Endothelial cell of umbilical vein (primary cell): ENCODE measurements at regions of chr6 and their contacts with region 1.

Region 1: DNA sequence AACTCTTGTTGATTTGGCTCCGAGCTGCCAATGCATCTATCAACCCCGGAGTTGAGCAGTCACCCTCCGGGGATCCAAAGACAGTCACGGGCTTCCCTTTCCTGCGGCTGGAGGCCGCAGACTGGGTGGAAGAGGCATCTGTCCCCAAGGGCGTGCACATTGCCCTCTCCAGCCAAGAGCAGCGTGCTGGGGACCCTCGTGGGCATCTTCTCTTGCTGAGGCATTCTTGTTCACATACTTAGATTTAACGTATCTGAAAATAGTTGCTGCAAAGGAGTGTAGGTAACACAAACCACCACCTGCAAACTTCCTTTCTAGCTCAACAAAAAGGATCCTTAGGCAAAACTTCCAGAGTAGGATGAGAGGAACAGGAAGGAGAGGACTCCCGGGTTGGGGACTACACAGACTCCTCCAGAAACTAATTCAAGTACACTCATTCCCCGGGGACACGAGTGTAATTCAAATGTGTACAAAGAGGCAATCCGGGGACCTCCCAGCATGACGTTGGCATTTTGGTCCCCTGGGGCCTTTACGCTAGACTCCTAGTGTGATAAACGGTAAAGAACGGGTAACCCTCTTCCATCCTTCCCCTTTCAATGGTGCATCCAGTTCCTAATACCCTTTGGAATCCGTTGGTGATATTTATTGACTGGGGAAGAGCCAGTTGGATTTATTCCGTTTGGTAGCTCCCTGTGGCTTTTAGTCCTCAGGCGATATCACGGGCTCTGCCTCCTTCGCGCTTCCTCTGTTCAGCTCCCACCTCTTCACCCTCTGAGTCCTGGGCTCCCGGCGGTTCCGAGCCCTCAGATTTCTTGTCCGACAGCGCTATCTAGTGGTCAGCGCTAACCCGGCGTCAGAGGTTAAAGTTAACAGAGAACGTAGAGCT is 2.7 kb upstream of the COL12A1 start:
- DNase-seq: peak; percentile 80
- H3K4me3 ChIP-seq: no peak overlapping the region
- H3K27ac ChIP-seq: no peak overlapping the region
- H3K4me1 ChIP-seq: peaks cover 31% of the 10 kb centered on the region
- H3K27me3 ChIP-seq: peaks cover 17% of the 10 kb centered on the region in 2 experiments
- CTCF ChIP-seq: peak; percentile 78 to 92
- POLR2A ChIP-seq: no peak

Region 2: DNA sequence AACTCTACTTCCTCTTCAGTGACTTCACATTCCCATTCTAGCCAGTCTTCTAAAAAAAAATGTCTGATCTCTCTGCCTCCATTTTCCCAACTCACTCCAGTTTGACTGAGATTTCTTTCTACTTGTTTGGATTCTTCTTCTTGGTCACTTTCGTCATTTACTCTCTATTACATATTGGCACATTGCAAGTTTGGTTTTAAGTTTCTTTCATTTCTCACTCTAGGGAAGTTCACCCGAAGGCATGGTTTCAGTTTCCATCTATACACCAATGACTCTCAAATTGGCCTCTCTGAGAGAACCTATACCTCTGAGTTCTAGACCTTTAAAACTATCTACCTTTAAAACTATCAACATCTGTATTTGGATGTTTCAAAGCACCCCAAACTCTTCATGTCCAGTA is 1461.3 kb before region 1 on chr6:
- CTCF ChIA-PET with region 1: interaction called, 37 read pairs
- POLR2A ChIA-PET with region 1: no interaction called
- dilution Hi-C with region 1: no loop called
- intact Hi-C with region 1: no loop called
- DNase-seq: no peak
- H3K4me3 ChIP-seq: no peak overlapping the region
- H3K27ac ChIP-seq: no peak overlapping the region
- H3K4me1 ChIP-seq: no peaks in the 10 kb centered on the region
- H3K27me3 ChIP-seq: no peaks in the 10 kb centered on the region
- CTCF ChIP-seq: no peak
- POLR2A ChIP-seq: no peak

Region 3: DNA sequence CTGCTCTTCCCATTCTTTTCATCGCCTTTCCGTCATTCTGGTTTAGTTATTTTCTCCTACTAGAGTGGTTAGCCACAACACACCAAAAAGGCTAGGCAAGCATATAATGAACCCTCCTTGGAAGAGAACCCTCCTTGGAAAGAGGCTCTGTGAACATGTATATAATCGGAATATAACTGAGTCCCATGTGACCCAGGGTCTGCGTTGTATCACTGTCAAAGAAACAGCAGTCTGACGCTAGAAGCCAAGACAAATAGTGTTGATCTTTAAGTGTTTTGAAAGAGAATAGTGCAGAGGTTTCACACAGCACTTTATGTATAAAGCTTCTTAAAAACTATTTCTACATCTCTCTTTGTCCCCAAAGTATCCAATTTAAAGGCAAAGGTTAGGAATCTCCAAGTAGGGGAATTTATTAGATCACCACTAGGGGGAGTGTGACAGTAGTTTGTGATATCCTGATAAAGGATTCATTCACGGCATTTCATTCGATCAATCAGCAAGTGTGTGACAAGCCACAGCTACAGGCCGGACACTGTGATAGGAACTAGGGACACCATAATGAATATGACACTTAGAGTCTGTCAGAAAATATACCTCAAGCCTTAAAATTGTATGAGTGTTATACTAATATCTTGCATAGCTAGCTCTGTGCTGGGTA is 1117.3 kb before region 1 on chr6:
- CTCF ChIA-PET with region 1: interaction called, 157 read pairs
- POLR2A ChIA-PET with region 1: no interaction called
- dilution Hi-C with region 1: no loop called
- intact Hi-C with region 1: loop called (anchors 1 kb)
- DNase-seq: peak; percentile 57
- H3K4me3 ChIP-seq: no peak overlapping the region
- H3K27ac ChIP-seq: no peak overlapping the region
- H3K4me1 ChIP-seq: no peaks in the 10 kb centered on the region
- H3K27me3 ChIP-seq: no peaks in the 10 kb centered on the region
- CTCF ChIP-seq: peak; percentile 46 to 55
- POLR2A ChIP-seq: no peak

Region 4: DNA sequence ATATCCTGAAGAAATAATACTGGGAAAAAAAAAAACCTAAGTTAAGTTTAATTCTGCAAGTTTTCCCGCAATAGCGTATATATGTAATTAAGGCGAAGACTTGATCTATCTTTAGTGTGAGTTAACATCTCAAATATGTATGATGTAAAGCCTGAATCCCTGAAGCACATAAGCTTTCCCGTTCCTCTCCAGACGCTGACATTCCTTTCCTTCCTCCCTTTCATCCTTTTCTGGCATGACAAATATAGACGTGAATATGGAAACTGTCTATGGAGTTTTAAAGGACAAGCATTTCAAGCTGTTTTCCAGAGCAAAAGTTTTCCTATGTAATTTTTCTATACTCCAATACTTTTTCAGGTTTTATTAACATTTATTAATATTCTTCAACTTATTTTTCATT is 639.7 kb before region 1 on chr6:
- CTCF ChIA-PET with region 1: interaction called, 14 read pairs
- POLR2A ChIA-PET with region 1: no interaction called
- dilution Hi-C with region 1: no loop called
- intact Hi-C with region 1: loop called (anchors 2 kb)
- DNase-seq: peak; percentile 87
- H3K4me3 ChIP-seq: peak overlapping the region in 1 of 3 experiments; percentile 21
- H3K27ac ChIP-seq: peak overlapping the region; percentile 88
- H3K4me1 ChIP-seq: peaks cover 21% of the 10 kb centered on the region
- H3K27me3 ChIP-seq: no peaks in the 10 kb centered on the region
- CTCF ChIP-seq: no peak
- POLR2A ChIP-seq: no peak

Region 5: DNA sequence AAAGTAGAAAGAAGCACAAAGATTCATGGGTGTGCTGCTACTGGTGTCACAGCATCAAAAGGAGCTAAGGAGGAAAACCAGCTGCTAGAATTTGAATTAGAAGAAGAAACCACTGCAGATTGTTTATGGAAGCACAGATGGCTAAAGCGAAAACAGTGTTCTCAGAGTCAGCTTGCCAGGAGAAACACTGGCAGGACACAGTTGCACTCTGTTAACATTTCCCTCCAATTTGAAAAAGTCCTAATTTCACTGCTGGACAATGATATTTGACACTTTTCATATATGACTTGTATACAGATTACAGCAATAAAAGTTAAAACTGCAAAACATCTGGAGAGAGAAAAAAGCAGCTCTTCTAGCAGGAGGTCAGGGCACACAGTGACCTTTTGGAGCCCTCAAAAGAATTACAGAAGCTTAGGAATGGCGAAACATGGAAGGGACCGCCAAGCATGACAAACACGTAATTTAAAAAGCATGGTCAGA is 317.2 kb before region 1 on chr6:
- CTCF ChIA-PET with region 1: interaction called, 10 read pairs
- POLR2A ChIA-PET with region 1: no interaction called
- dilution Hi-C with region 1: no loop called
- intact Hi-C with region 1: no loop called
- DNase-seq: no peak
- H3K4me3 ChIP-seq: no peak overlapping the region
- H3K27ac ChIP-seq: no peak overlapping the region
- H3K4me1 ChIP-seq: no peaks in the 10 kb centered on the region
- H3K27me3 ChIP-seq: no peaks in the 10 kb centered on the region
- CTCF ChIP-seq: no peak
- POLR2A ChIP-seq: no peak

Region 6: DNA sequence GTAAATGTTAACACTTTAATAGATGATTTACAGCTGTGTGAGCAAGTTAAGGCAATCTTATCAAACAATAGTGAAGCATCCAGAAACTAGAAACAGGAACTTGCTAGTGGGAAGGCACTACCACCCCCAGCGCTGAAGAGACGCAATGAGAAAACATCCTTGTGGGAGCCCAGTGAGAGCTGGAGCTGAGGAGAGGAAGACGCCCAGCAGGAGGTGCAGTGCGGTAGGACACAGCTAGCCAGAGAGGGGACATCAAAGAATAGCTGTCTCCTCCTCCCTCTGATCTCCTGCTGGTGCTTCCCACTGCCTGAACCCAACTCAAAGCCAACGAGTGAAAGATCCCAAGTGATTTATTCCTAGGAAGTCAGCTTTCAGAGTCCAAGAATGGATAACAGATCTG is 143.0 kb before region 1 on chr6:
- CTCF ChIA-PET with region 1: interaction called, 41 read pairs
- POLR2A ChIA-PET with region 1: no interaction called
- dilution Hi-C with region 1: no loop called
- intact Hi-C with region 1: loop called (anchors 1 kb)
- DNase-seq: peak; percentile 31
- H3K4me3 ChIP-seq: no peak overlapping the region
- H3K27ac ChIP-seq: no peak overlapping the region
- H3K4me1 ChIP-seq: no peaks in the 10 kb centered on the region
- H3K27me3 ChIP-seq: no peaks in the 10 kb centered on the region
- CTCF ChIP-seq: peak in 1 of 2 donors; percentile 6
- POLR2A ChIP-seq: no peak

Region 7: DNA sequence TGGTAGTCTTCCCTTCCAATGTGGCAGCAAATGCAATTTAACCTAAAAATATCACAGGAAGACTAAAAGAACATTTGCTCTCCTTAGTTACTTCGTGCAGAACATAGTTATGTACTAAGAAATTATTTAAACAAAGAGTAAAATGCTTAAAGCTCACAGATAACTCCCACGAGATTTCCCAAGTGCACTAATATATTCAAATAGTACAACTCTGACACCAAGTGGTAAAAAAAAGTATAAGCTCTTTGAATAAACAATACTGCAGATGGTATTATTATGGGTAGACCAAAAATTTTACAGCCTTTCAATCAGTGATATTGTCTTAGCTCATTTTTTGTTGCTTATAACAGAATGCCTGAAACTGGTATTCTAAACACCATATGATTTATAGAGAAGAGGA is 337.8 kb after region 1 on chr6:
- CTCF ChIA-PET with region 1: interaction called, 13 read pairs
- POLR2A ChIA-PET with region 1: no interaction called
- dilution Hi-C with region 1: no loop called
- intact Hi-C with region 1: loop called (anchors 5 kb)
- DNase-seq: peak; percentile 38
- H3K4me3 ChIP-seq: no peak overlapping the region
- H3K27ac ChIP-seq: no peak overlapping the region
- H3K4me1 ChIP-seq: no peaks in the 10 kb centered on the region
- H3K27me3 ChIP-seq: no peaks in the 10 kb centered on the region
- CTCF ChIP-seq: no peak
- POLR2A ChIP-seq: no peak

Region 8: GRCh38 chr6:75563032-75563431 is 354.5 kb after region 1 on chr6:
- CTCF ChIA-PET with region 1: no interaction called
- POLR2A ChIA-PET with region 1: no interaction called
- dilution Hi-C with region 1: no loop called
- intact Hi-C with region 1: no loop called
- DNase-seq: peak; percentile 35
- H3K4me3 ChIP-seq: no peak overlapping the region
- H3K27ac ChIP-seq: no peak overlapping the region
- H3K4me1 ChIP-seq: no peaks in the 10 kb centered on the region
- H3K27me3 ChIP-seq: peaks cover 17% of the 10 kb centered on the region in 2 experiments
- CTCF ChIP-seq: peak; percentile 44 to 59
- POLR2A ChIP-seq: no peak